ENCODE measurements at regions of chr4 and their contacts with region 1.

Region 1: GRCh38 chr4:73434311-73434710 is 1.7 kb upstream of the AFP start:
- DNase-seq: no peak
- H3K4me3 ChIP-seq: no peak overlapping the region
- CTCF ChIP-seq: peak; percentile 24

Region 2: DNA sequence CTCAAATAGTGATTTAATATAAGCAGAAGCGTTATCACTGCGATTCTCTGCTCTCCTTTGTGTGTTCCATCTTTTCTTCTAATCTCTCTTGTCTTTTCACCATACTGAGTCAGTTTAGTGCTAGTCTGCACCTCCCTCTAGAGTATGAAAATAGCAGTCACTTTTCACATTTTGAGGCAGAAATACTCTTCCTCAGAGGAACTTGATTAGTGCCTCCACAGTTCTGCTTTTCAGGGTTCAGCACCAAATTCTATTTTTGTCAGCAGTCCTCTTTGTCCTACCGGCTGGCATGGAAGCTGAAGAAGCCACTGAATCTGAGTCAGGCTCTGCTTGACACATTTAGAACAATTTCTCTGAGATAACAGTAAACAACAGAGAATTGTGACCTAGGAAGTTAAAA is 126.0 kb before region 1 on chr4:
- CTCF ChIA-PET with region 1: interaction called, 18 read pairs
- POLR2A ChIA-PET with region 1: no interaction called
- DNase-seq: no peak
- H3K4me3 ChIP-seq: no peak overlapping the region
- CTCF ChIP-seq: peak; percentile 38

Measured in AG04449 (cell line).